ENCODE measurements at regions of chr3 and their contacts with region 1.

Region 1: DNA sequence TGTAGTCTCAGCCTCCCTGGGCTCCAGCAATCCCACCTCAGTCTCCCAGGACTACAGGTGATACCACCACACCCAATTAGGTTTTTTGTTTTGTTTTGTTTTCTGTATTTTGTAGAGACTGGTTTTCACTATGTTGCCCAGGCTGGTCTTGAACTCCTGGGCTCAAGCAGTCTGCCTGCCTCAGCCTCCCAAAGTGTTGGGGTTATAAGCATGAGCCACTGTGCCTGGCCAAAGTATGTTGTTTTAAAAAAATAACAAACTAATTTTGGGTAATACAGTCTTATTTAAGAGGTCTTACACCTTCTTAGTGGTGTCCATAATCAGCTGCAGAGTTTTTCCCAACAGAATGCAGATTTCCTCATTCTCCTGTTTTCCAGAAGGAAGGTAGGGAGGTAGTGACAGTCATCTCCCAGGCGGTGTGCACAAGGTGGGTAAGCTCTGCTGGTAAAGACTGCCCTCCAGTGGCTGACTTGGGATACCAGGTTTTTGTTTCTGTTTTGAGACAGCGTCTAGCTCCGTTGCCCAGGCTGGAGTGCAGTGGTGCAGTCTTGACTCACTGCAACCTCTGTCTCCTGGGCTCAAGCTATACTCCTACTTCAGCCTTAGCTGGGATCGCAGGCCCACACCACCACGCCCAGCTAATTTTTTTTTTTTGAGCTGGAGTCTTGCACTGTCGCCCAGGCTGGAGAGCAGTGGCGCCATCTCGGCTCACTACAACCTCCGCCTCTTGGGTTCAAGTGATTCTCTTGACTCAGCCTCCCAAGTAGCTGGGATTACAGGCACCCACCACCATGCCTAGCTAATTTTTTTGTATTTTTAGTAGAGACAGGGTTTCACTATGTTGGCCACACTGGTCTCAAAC is 58.4 kb downstream of the MAP6D1 start:
- DNase-seq: no peak
- H3K4me3 ChIP-seq: no peak overlapping the region
- H3K27ac ChIP-seq: no peak overlapping the region
- H3K4me1 ChIP-seq: no peaks in the 10 kb centered on the region
- H3K27me3 ChIP-seq: no peaks in the 10 kb centered on the region
- CTCF ChIP-seq: peak; percentile 60 to 71 (median 61)
- POLR2A ChIP-seq: no peak

Region 2: DNA sequence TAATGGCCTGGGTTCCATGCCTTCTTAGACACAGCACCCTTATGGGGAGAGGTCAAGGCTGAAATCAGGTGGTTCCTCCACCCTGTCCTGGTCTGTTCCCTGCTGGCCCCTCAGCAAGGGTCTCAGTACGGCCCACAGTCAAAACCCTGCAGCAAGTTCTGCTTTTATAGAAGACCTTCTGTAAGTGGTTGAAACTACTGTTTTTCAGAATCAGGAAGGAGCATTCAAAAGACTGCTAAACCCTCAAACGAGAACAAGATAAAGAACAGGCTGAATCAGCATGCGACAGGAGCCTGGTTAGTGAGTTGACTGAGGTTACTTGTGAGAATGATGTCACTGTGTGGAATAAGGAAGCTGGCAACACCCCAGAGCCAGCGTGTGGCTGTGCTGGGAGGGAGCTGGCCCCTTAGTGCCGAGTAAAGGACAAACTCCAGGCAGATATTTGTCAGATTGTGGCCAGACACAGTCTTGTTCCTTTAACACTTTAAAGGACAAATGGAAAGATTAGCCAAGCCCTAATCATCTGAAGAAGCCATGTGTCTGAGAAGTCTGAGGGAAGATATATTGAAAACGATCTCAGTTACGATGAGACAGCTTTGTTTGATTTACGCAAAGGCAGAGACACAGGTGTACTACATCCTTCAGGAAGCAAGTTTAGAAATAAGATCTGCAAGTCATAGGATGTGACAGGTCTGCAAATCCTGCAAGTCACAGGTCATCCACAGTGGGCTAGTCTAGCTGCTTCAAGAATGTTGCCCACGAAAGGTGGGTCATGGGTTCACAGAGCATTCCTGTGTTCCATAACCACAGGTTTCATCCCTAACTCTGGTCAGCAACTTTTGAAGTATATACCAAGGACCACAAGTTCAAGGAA is 459.9 kb before region 1 on chr3:
- intact Hi-C with region 1: no loop called
- DNase-seq: no peak
- H3K4me3 ChIP-seq: no peak overlapping the region
- H3K27ac ChIP-seq: no peak overlapping the region
- H3K4me1 ChIP-seq: no peaks in the 10 kb centered on the region
- H3K27me3 ChIP-seq: no peaks in the 10 kb centered on the region
- CTCF ChIP-seq: no peak
- POLR2A ChIP-seq: no peak

Region 3: DNA sequence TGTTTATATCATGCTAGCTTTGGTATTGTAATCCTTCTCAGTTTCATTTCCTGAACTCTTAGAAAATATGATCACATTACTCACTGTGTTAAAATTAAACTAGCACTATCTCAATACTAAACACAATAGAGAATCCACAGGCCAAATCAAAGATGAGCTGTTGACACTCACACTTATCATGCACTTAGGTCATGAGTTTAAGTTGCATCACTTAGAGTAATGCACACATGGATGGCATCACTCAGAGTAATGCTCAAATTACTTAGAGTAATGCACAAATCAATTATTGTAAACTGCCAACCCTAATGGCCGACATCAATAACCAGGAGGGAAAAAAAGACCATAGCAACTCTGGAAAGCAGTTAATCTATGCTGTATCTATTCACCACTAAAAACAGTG is 298.6 kb before region 1 on chr3:
- intact Hi-C with region 1: loop called (anchors 5 kb)
- DNase-seq: no peak
- H3K4me3 ChIP-seq: no peak overlapping the region
- H3K27ac ChIP-seq: no peak overlapping the region
- H3K4me1 ChIP-seq: no peaks in the 10 kb centered on the region
- H3K27me3 ChIP-seq: no peaks in the 10 kb centered on the region
- CTCF ChIP-seq: no peak
- POLR2A ChIP-seq: no peak